Posterior vena cava (tissue), 2 donors: ENCODE measurements at regions of chr18 and their contacts with region 1.

Region 1: GRCh38 chr18:22796069-22796468 is 137.1 kb upstream of the RBBP8 start:
- DNase-seq: no peak

Region 2: GRCh38 chr18:22983175-22983574 is 187.1 kb after region 1 on chr18:
- intact Hi-C with region 1: loop called in 1 of 2 experiments (anchors 5 kb)
- DNase-seq: no peak